Astrocyte of the cerebellum (primary cell): ENCODE measurements at regions of chr19 and their contacts with region 1.

Region 1: GRCh38 chr19:40598121-40598917 is 2.9 kb upstream of the LTBP4 start:
- DNase-seq: peak; percentile 72
- H3K4me3 ChIP-seq: peak overlapping the region; percentile 43
- CTCF ChIP-seq: peak; percentile 98

Region 2: GRCh38 chr19:40461669-40462221 is 136.6 kb before region 1 on chr19:
- in situ Hi-C with region 1: no loop called
- DNase-seq: no peak
- H3K4me3 ChIP-seq: no peak overlapping the region
- CTCF ChIP-seq: no peak

Region 3: DNA sequence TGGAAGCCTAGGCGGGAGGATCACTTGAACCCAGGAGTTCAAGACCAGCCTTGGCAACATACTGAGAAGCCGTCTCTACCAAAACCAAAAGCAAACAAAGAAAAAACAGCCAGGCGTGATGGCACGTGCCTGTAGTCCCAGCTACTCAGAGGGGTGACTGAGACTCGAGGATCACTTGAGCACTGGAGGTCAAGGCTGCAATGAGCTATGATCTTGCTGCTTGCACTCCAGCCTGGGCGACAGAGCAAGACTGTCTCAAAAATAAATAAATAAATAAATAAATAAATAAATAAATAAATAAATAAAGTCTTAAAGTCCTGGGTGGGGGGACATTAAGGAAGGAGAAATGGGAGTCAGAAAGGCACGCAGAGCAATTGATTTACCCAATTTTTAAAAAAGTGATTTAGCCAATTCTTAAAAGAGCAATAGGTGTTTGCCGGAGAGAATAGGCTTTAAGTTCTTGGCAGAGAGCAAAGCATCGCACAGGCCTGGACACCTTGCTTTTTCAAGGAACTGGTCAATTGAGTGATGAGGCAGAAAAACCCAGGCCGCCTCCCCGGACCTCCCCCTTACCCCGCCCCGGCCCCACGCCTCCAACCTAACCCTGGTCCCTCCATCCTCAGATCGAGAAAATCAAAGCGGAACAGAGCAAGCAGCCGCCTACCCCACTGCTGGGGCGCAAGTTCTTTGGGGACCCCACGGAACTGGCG is 31.1 kb before region 1 on chr19:
- in situ Hi-C with region 1: no loop called
- DNase-seq: no peak
- H3K4me3 ChIP-seq: peak overlapping the region; percentile 24
- CTCF ChIP-seq: no peak

Region 4: DNA sequence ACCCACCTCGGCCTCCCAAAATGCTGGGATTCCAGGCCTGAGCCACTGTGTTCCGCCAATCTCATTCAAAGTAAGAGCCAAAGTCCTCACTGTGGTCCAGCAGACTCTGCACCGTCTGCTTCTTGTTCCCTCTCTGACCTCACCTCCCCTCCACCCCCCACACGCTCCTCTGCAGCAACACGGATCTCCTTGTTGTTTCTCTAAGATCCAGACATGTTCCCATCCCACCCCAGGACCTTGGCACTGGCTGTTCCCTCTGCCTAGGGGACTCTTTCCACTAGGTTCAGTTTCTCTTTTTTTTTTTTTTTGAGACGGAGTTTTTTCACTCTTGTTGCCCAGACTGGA is 41.3 kb after region 1 on chr19:
- in situ Hi-C with region 1: loop called (anchors 5 kb)
- DNase-seq: no peak
- H3K4me3 ChIP-seq: no peak overlapping the region
- CTCF ChIP-seq: no peak